Right lobe of liver (tissue), 6 donors: ENCODE measurements at regions of chr3 and their contacts with region 1.

Region 1: GRCh38 chr3:195760345-195761122 is 39.8 kb downstream of the MUC20 start:
- DNase-seq: peak in 1 of 3 donors; percentile 48
- ATAC-seq: no peak
- H3K4me3 ChIP-seq: no peak overlapping the region
- H3K27ac ChIP-seq: no peak overlapping the region
- H3K4me1 ChIP-seq: no peaks in the 10 kb centered on the region
- H3K27me3 ChIP-seq: no peaks in the 10 kb centered on the region
- CTCF ChIP-seq: no peak
- POLR2A ChIP-seq: no peak

Region 2: DNA sequence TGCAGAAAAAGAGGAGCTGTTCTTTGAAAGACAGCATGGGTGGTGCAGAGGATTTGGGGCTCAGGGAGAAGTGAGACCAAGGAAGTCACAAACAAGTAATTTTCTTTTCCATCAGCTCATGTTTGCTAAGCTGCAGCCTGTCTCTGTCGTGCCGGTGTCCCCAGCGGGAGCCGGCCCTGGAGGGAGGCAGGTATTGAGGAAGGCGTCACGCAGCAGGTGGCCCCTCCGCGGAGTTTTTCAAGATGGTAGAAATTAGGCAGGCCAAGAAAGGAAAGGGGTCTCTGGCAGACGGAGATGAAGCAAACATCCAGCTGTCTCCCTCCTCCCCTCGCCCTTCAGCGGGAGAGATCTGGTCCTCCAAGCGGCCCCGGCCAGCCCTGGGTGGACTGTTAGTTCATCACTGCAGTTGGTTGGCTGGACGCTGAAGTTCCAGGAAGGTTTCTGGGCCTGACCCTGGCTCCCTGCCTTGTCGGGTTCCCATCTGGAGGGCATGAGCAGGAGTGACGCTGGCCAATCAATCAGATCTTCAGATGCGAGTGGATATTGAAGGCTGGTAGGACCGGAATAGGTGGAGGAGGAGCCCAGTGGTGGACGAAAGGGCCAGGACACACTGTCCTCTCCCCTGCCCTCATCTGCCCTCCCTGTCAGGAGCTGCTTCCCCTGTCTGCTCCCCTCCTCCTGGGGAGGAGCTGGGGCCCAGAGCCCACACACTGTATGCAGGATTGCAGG is 78.9 kb after region 1 on chr3:
- intact Hi-C with region 1: loop called in 1 of 2 experiments (anchors 10 kb)
- DNase-seq: peak; percentile 48 to 91 (median 89)
- ATAC-seq: peak; percentile 88 to 97 (median 93)
- H3K4me3 ChIP-seq: peak overlapping the region in 1 of 3 donors; percentile 19
- H3K27ac ChIP-seq: peak overlapping the region in 1 of 3 donors; percentile 66
- H3K4me1 ChIP-seq: no peaks in the 10 kb centered on the region
- H3K27me3 ChIP-seq: no peaks in the 10 kb centered on the region
- CTCF ChIP-seq: no peak
- POLR2A ChIP-seq: no peak

Region 3: DNA sequence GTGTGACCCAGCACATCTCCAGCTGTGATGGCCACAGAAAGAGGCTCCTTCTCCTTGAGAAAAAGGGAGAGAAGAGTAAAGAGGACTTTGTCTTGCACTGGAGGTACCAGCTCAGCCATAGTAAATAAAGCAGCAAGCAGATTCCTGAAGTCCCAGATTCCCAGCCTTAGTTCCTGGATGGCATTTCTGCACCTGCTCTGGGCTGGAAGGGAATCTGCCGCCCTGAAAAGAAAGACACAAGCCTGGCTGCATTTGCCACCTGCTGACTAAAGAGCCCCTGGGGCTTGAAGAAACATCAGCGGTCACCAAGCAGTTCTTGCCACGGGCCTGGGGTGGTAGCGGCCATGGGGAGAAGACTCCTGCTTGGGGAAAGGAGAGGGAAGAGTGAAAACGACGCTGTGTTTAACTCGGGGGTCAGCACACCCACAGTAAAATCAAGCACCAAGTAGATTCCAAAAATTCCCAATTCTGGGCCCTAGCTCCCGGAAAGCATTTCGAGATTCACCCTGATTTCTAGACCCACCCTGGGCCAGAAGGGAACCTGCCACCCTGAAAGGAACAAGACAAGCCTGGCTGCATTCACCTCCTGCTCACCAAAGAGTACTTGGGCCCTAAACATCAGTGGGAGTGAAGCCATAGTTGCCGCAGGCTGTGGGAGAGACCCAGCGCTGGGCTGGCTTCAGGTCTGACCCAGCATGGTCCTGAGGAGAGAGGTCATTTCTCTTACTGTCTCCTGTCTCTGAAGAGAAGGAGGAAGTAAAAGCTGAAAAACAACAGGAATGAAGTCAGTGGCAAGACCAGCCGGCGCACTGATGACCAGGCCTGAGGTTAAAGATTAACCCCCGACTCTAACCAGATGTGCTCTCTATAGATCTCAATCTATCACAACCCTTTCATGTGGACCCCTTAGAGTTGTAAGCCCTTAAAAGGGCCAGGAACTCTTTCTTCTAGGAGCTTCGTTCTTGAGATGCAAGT is 172.2 kb after region 1 on chr3:
- intact Hi-C with region 1: no loop called
- DNase-seq: peak in 1 of 3 donors; percentile 33
- ATAC-seq: peak in 2 of 4 donors; percentile 13 to 74
- H3K4me3 ChIP-seq: no peak overlapping the region
- H3K27ac ChIP-seq: no peak overlapping the region
- H3K4me1 ChIP-seq: no peaks in the 10 kb centered on the region
- H3K27me3 ChIP-seq: no peaks in the 10 kb centered on the region
- CTCF ChIP-seq: no peak
- POLR2A ChIP-seq: no peak